K562 (cell line): ENCODE measurements at regions of chr11 and their contacts with region 1.

Region 1: DNA sequence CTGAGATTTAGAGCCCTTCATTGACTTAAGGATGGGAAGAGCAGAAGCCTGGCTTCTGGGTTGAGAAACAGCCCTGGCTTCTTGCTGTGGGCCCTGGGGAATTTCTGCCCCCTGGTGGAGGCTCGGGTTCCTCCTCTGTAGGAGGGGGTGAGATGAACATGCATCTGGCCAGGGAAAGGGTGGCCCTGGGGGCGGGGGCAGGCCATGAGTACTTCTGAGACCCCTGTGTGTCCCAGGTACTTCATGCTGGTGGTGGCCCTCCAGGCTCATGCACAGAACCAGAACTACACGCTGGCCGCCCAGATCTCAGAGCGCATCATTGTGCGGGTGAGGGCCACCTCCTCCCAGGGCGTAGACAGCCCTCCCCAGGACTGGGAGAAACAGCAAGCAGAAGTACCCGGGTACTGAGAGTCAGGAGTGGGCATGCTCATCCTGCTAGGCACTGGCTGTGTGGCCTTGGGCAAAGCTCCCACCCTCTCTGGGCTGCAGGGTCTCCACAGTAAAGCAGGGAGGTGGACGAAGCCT is 15.8 kb downstream of the TMEM258 start:
- DNase-seq: peak; percentile 84 to 90 (median 86)
- ATAC-seq: peak; percentile 94
- H3K4me3 ChIP-seq: no peak overlapping the region
- H3K27ac ChIP-seq: no peak overlapping the region
- H3K4me1 ChIP-seq: peaks cover 0 to 58% of the 10 kb centered on the region in 2 experiments; a peak in 2 of 5 replicates
- H3K27me3 ChIP-seq: no peaks in the 10 kb centered on the region
- CTCF ChIP-seq: peak; percentile 89 to 93 (median 92)
- EP300 ChIP-seq: no peak
- POLR2A ChIP-seq: no peak
- RAD21 ChIP-seq: peak; percentile 61 to 86

Region 2: DNA sequence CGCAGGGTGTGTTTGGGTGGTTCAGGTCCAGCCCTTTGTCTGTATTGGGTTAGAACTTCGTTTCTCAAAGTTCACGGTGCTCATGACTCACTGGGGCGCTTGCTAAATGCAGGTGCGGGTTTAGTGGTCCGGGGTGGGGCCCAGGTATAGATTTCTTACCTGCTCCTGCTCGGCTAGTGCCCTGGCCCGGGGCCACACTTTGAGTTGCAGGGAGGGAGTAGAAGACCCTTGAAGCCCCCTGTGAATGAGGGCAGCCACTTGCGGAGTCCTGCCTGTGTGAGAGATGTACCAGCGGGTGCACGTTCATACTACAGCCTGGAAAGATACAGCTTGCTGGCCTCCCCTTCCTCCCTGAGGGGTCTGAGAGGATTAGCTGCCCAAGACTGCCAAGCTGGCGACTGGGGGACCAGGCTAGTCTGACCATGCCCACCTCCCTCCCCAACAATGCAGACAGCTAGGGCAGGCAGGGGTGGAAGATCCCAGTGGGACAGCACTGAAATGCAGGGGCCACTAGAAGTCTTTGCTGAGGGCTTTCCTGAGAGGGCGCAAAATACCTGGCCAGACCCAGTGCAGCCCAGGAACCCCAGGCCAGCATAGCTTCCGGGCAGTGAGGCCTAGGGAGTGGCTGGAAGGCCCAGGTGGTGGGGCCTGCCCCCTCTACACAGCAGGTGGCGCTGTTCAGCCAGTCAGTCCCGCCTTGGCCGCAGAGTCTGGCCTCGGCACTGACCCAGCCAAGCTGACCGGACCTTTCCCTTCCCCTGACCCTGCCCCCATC is 29.2 kb before region 1 on chr11:
- CTCF ChIA-PET with region 1: interaction called, 10 read pairs
- POLR2A ChIA-PET with region 1: interaction called, 3 read pairs
- in situ Hi-C with region 1: no loop called
- intact Hi-C with region 1: loop called (anchors 1 kb)
- DNase-seq: peak; percentile 86 to 90 (median 88)
- ATAC-seq: peak; percentile 90
- H3K4me3 ChIP-seq: no peak overlapping the region
- H3K27ac ChIP-seq: no peak overlapping the region
- H3K4me1 ChIP-seq: peaks cover 43 to 84% of the 10 kb centered on the region in 2 experiments
- H3K27me3 ChIP-seq: no peaks in the 10 kb centered on the region
- CTCF ChIP-seq: peak; percentile 94 to 96 (median 95)
- EP300 ChIP-seq: no peak
- POLR2A ChIP-seq: no peak
- RAD21 ChIP-seq: peak; percentile 90 to 97

Region 3: DNA sequence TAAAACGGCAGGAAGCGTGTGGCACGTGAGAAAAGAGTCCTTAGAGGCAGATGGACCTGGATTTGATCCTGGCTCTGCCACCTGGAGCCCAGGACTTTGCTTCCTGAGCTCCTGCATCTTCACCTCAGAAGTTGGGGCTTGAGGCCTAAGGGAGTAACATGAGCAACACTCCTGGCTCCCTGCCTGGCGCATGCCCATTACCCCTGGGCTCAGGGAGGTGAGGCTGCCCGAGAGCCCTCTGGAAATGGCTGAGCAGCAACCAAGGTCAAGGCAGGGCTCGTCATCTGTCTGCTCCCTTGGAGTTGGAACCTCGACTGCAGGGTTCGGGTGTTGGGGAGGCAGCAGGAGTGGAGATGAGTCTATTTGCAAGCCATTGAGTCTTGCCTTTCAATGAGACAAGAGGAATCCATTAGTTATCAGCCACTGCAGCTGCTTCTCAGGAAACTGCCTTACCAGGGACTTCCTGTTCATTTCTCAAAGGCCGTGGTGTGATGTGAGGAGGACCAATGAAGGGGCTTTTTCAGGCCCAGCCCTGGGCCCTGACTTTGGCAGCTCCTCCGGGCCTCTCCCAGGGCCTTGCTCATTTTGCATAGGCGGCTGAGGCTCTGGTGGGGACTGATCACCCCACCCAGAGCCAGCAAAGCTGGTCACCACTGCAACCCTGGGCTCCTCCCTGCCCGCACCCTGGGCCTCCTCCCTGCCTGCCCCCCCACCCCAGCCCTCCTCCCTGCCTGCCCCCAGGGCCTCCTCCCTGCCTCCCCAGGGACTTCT is 57.9 kb after region 1 on chr11:
- CTCF ChIA-PET with region 1: no interaction called
- POLR2A ChIA-PET with region 1: no interaction called
- in situ Hi-C with region 1: no loop called
- intact Hi-C with region 1: no loop called
- DNase-seq: peak; percentile 93 to 98 (median 94)
- ATAC-seq: peak; percentile 97
- H3K4me3 ChIP-seq: 0 out of 2 replicates have a peak overlapping the region, but pooled peaks have one; percentile 4
- H3K27ac ChIP-seq: peak overlapping the region; percentile 100
- H3K4me1 ChIP-seq: peaks cover 51 to 62% of the 10 kb centered on the region in 2 experiments
- H3K27me3 ChIP-seq: no peaks in the 10 kb centered on the region
- CTCF ChIP-seq: no peak
- EP300 ChIP-seq: peak; percentile 95
- POLR2A ChIP-seq: peak; percentile 72
- RAD21 ChIP-seq: peak in 1 of 2 experiments; percentile 18; a peak in 2 of 4 replicates